Naive thymus-derived CD4-positive, alpha-beta T cell (primary cell): ENCODE measurements at regions of chr18 and their contacts with region 1.

Region 1: DNA sequence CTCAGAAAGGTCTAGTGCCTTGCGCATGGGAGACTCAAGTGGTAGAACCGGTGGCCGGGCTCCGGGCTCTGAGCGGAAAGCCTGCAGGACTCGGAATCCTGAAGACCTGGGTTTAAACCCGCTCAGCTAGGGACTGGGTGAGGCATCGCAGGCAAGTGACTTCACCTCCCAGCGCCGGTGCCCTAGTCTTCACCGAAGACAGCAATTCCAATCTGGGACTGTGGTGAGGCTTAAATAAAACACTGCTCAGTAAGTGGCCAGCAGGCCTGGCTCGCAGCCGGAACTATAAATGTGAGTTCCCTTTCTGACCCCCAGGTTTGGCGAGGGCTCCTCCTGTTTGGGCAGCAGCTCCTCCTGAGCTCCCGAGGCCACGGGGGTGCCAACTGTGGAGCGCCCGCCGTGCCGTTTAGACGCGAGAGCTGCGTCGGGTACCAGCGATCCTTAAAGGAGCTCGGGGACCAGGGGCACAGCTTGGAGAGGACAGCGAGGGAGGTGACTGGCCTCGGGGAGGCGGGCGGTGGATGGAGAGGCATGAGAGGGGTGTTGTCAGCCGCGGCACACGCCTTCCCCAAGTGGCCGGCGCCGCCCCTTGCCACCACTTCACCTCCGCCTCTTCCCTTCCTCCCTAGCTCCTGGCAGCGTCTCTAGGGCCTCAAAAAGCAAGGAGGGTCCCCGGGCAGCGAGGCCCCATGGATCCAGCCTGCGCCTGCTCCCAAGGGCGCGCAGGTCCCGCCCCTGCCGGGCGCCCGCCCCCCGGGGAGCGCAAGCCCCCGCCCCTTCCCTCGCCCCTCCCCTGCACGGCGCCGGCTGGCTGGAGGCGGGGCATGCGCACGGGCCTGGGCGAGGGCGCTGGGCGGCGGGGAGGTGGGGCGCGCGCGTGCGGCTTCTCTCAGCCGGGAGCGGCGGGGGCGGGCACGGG is 736 bp upstream of the MTCL1 start:
- DNase-seq: peak; percentile 65 to 92 (median 75)
- ATAC-seq: peak; percentile 96
- H3K4me3 ChIP-seq: peak overlapping the region; percentile 75
- H3K4me3 Mint-ChIP-seq: peak overlapping the region; percentile 83 to 96 (median 90)
- H3K27ac ChIP-seq: peak overlapping the region; percentile 25
- H3K27ac Mint-ChIP-seq: peak overlapping the region in 4 of 9 donors; percentile 4 to 67 (median 48)
- H3K4me1 ChIP-seq: peaks cover 6 to 21% of the 10 kb centered on the region in 2 donors
- H3K4me1 Mint-ChIP-seq: peaks cover 13 to 29% (median 17%) of the 10 kb centered on the region in 7 donors
- H3K27me3 ChIP-seq: peaks cover 5 to 19% of the 10 kb centered on the region in 2 donors
- H3K27me3 Mint-ChIP-seq: peaks cover 60 to 78% (median 68%) of the 10 kb centered on the region in 5 donors

Region 2: GRCh38 chr18:8643326-8643878 is 61.2 kb before region 1 on chr18:
- CTCF ChIA-PET with region 1: no interaction called
- POLR2A ChIA-PET with region 1: no interaction called
- intact Hi-C with region 1: no loop called
- DNase-seq: no peak
- ATAC-seq: no peak
- H3K4me3 ChIP-seq: no peak overlapping the region
- H3K4me3 Mint-ChIP-seq: no peak overlapping the region
- H3K27ac ChIP-seq: no peak overlapping the region
- H3K27ac Mint-ChIP-seq: no peak overlapping the region
- H3K4me1 ChIP-seq: no peaks in the 10 kb centered on the region
- H3K4me1 Mint-ChIP-seq: no peaks in the 10 kb centered on the region
- H3K27me3 ChIP-seq: no peaks in the 10 kb centered on the region
- H3K27me3 Mint-ChIP-seq: peaks cover 5 to 13% (median 11%) of the 10 kb centered on the region in 5 donors

Region 3: GRCh38 chr18:8745355-8746014 is 40.9 kb after region 1 on chr18:
- CTCF ChIA-PET with region 1: interaction called, 3 read pairs
- POLR2A ChIA-PET with region 1: interaction called, 3 read pairs
- intact Hi-C with region 1: loop called in 1 of 2 experiments (anchors 2 kb)
- DNase-seq: peak in 2 of 9 donors; percentile 10 to 30
- ATAC-seq: no peak
- H3K4me3 ChIP-seq: no peak overlapping the region
- H3K4me3 Mint-ChIP-seq: peak overlapping the region in 9 of 10 donors; percentile 2 to 84 (median 53)
- H3K27ac ChIP-seq: no peak overlapping the region
- H3K27ac Mint-ChIP-seq: peak overlapping the region in 7 of 9 donors; percentile 5 to 91 (median 77)
- H3K4me1 ChIP-seq: peaks cover 29 to 32% of the 10 kb centered on the region in 2 donors
- H3K4me1 Mint-ChIP-seq: peaks cover 20 to 54% (median 50%) of the 10 kb centered on the region in 7 donors
- H3K27me3 ChIP-seq: no peaks in the 10 kb centered on the region
- H3K27me3 Mint-ChIP-seq: peaks cover 0 to 7% (median 0%) of the 10 kb centered on the region in 5 donors

Region 4: DNA sequence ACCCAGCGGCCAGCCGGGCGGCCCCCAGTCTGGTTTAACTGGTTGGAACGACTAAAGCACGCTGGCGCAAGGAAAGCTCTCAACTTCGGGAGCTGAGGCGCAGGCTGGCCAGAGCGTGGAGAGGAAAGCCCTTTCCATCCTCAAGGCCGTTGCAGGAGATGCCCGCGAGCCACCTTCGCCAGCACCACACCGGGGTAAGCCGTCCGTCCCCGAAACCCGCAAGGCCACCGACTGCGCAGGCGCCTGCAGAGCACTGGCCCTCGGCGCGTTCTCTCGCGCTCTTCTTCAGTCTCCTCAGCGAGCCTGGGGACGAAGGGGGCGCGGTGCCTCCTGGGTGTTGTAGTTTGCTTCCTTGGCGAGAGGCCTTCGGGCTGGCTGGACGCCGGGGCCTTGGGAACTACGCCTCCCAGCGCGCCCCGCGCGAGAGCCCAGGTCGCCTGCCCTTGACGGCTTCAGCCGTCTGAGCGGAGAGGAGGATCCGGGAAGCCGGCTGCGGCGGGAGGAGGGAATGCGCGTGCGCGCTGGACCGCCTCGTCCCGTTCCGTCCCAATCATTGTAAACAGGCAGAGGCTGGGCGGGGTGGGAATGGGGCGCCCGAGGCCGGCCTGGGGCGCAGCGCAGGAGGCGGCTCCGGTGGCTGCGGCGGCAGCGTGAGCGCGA is 770.5 kb after region 1 on chr18 and contains the start of gene RALBP1:
- CTCF ChIA-PET with region 1: no interaction called
- POLR2A ChIA-PET with region 1: no interaction called
- intact Hi-C with region 1: loop called (anchors 1 to 2 kb)
- DNase-seq: peak; percentile 92 to 98 (median 96)
- ATAC-seq: peak; percentile 99
- H3K4me3 ChIP-seq: peak within 1 kb of the TSS; percentile 88
- H3K4me3 Mint-ChIP-seq: peak within 1 kb of the TSS; percentile 84 to 99 (median 97)
- H3K27ac ChIP-seq: peak within 1 kb of the TSS; percentile 81
- H3K27ac Mint-ChIP-seq: peak within 1 kb of the TSS; percentile 82 to 97 (median 94)
- H3K4me1 ChIP-seq: peaks cover 0 to 14% of the 10 kb centered on the region in 2 donors
- H3K4me1 Mint-ChIP-seq: peaks cover 21 to 41% (median 30%) of the 10 kb centered on the region in 7 donors
- H3K27me3 ChIP-seq: no peaks in the 10 kb centered on the region
- H3K27me3 Mint-ChIP-seq: peaks cover 0 to 24% (median 5%) of the 10 kb centered on the region in 5 donors
- total RNA-seq, gene RALBP1: 20.3 to 47.8 (median 42.2) TPM